Activated CD4-positive, alpha-beta T cell treated with anti-CD3 and anti-CD28 coated beads for 36 hours (primary cell): ENCODE measurements at regions of chr1 and their contacts with region 1.

Region 1: GRCh38 chr1:40979233-40980067 is at the start of gene CTPS1:
- DNase-seq: peak; percentile 98
- ATAC-seq: peak; percentile 86
- H3K4me3 Mint-ChIP-seq: peak within 1 kb of the TSS; percentile 86
- H3K27ac Mint-ChIP-seq: peak within 1 kb of the TSS; percentile 95
- H3K4me1 Mint-ChIP-seq: peaks cover 47% of the 10 kb centered on the region
- H3K27me3 Mint-ChIP-seq: no peaks in the 10 kb centered on the region
- total RNA-seq, gene CTPS1: 89.5 to 106 TPM

Region 2: GRCh38 chr1:40059338-40059959 is 920.0 kb before region 1 on chr1:
- CTCF ChIA-PET with region 1: no interaction called
- POLR2A ChIA-PET with region 1: no interaction called
- intact Hi-C with region 1: loop called in 1 of 2 experiments (anchors 5 kb)
- DNase-seq: peak; percentile 46
- ATAC-seq: peak; percentile 54
- H3K4me3 Mint-ChIP-seq: peak overlapping the region; percentile 60
- H3K27ac Mint-ChIP-seq: peak overlapping the region; percentile 90
- H3K4me1 Mint-ChIP-seq: peaks cover 88% of the 10 kb centered on the region
- H3K27me3 Mint-ChIP-seq: no peaks in the 10 kb centered on the region

Region 3: GRCh38 chr1:40449684-40450494 is 529.6 kb before region 1 on chr1 and contains the start of gene ZFP69B:
- CTCF ChIA-PET with region 1: no interaction called
- POLR2A ChIA-PET with region 1: no interaction called
- intact Hi-C with region 1: loop called in 1 of 2 experiments (anchors 1 kb)
- DNase-seq: peak; percentile 96
- ATAC-seq: peak; percentile 67
- H3K4me3 Mint-ChIP-seq: peak within 1 kb of the TSS; percentile 71
- H3K27ac Mint-ChIP-seq: peak within 1 kb of the TSS; percentile 97
- H3K4me1 Mint-ChIP-seq: peaks cover 30% of the 10 kb centered on the region
- H3K27me3 Mint-ChIP-seq: no peaks in the 10 kb centered on the region
- total RNA-seq, gene ZFP69B: 4.6 to 5.3 TPM

Region 4: DNA sequence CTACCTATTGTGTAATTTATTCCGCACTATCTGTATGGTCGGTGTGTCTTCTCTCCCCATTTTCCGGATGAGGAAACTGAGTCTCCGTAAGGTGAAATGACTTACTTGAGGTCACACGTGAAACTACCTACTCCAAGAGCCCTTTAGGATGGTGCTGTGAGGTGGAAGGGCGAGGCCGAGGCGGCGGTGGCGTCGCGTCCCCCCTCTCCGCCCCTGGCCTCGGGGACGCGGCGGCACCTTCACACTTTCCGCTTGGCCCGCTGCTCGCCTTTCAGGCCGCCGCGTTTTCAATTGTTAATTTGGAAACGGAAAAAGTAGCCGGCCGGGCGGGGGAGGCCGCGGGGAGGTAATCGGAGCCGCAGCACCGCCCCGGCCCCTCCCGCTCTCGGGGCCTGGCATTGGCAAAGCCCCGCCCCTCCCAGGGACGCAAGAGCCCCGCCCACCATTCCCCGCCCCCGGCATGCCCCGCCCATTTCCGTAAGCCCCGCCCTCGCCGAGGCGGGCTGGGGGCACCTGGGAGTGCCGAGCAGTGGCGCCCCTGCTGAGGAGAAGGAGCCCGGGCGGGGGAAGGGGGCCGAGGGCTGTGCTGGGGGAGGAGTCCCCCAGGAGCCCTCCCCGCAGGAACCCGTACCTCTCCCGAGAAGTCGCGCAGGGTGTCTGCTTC is 177.2 kb before region 1 on chr1:
- CTCF ChIA-PET with region 1: no interaction called
- POLR2A ChIA-PET with region 1: interaction called, 10 read pairs
- intact Hi-C with region 1: loop called in 1 of 2 experiments (anchors 1 kb)
- DNase-seq: peak; percentile 93
- ATAC-seq: peak; percentile 95
- H3K4me3 Mint-ChIP-seq: peak overlapping the region; percentile 48
- H3K27ac Mint-ChIP-seq: no peak overlapping the region
- H3K4me1 Mint-ChIP-seq: peaks cover 25% of the 10 kb centered on the region
- H3K27me3 Mint-ChIP-seq: no peaks in the 10 kb centered on the region

Region 5: DNA sequence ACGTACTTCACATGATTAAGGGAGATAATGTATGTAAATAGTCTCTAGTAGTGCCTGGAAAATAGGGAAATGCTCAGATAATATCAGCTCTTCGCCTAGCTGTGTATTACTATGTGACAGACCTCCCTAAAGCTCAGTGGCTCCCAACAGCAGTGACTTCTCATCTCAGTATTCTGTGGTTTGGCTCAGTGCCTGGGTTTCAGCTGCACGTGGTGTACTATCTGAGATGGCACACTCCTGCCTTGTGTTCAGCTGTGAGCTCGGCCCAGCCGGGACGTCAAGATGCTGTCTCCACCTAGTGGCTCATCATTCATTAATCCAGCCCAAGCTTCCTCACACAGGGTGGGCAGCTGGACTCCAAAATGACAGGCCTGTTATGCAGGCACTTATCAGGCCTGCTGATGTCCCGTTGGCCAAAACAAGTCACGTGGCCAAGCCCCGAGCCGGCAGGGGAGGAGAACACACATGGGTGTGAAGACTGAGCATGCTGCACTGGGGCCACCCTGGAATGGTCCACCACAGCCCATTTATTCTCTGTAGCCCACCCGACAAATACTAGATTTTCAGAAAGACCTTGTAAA is 24.3 kb after region 1 on chr1:
- CTCF ChIA-PET with region 1: interaction called, 22 read pairs
- POLR2A ChIA-PET with region 1: interaction called, 7 read pairs
- intact Hi-C with region 1: loop called (anchors 1 kb)
- DNase-seq: peak; percentile 96
- ATAC-seq: peak; percentile 100
- H3K4me3 Mint-ChIP-seq: no peak overlapping the region
- H3K27ac Mint-ChIP-seq: no peak overlapping the region
- H3K4me1 Mint-ChIP-seq: peaks cover 26% of the 10 kb centered on the region
- H3K27me3 Mint-ChIP-seq: no peaks in the 10 kb centered on the region

Region 6: GRCh38 chr1:41122851-41123507 is 143.5 kb after region 1 on chr1:
- CTCF ChIA-PET with region 1: no interaction called
- POLR2A ChIA-PET with region 1: no interaction called
- intact Hi-C with region 1: no loop called
- DNase-seq: peak; percentile 18
- ATAC-seq: peak; percentile 83
- H3K4me3 Mint-ChIP-seq: no peak overlapping the region
- H3K27ac Mint-ChIP-seq: no peak overlapping the region
- H3K4me1 Mint-ChIP-seq: peaks cover 4% of the 10 kb centered on the region
- H3K27me3 Mint-ChIP-seq: no peaks in the 10 kb centered on the region

Region 7: DNA sequence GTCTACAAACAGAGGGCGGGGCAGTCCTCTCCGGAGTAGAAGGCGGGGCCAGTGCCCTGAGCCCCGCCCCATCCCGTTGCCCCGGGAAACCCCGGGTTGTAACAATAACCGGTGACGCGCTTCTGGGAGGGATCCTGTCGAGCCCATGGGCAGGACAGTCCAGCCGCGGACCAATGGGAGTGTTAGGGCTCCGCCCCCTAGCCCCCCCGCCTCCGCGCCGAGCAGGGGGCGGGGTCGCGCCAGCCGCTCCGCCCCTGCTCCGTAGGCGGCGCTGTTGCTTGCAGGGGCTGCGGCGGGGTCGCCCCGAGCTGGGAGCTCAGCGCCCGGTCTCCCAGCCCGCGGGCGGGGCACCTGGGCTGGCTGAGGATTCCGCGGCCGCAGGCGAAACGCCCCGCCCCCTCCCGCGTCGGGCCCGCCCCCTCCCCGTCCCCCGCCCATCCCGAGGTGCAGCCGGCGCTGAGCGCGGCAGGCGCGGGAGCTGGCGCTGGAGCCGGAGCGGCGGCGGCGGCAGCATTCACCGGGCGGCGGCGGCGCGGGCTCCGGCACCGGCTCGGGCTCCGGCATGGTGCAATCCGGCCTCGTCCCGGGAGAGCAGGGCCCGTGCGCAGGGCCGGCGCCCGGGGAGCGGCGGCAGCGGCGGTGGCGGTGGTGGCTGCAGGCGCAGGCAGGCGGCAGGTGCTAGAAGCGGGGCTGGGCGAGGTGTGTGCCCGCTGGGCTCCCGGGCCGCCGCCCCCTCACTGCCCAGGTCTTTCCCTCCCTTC is 381.7 kb after region 1 on chr1 and contains the start of gene FOXO6:
- CTCF ChIA-PET with region 1: no interaction called
- POLR2A ChIA-PET with region 1: no interaction called
- intact Hi-C with region 1: loop called in 1 of 2 experiments (anchors 5 kb)
- DNase-seq: peak; percentile 96
- ATAC-seq: peak; percentile 96
- H3K4me3 Mint-ChIP-seq: peak within 1 kb of the TSS; percentile 49
- H3K27ac Mint-ChIP-seq: no peak within 1 kb of the TSS
- H3K4me1 Mint-ChIP-seq: peaks cover 10% of the 10 kb centered on the region
- H3K27me3 Mint-ChIP-seq: peaks cover 24% of the 10 kb centered on the region
- total RNA-seq, gene FOXO6: 0.09 TPM in 1 of 2 experiments, not detected in the other